ENCODE measurements at regions of chr4 and their contacts with region 1.

Region 1: DNA sequence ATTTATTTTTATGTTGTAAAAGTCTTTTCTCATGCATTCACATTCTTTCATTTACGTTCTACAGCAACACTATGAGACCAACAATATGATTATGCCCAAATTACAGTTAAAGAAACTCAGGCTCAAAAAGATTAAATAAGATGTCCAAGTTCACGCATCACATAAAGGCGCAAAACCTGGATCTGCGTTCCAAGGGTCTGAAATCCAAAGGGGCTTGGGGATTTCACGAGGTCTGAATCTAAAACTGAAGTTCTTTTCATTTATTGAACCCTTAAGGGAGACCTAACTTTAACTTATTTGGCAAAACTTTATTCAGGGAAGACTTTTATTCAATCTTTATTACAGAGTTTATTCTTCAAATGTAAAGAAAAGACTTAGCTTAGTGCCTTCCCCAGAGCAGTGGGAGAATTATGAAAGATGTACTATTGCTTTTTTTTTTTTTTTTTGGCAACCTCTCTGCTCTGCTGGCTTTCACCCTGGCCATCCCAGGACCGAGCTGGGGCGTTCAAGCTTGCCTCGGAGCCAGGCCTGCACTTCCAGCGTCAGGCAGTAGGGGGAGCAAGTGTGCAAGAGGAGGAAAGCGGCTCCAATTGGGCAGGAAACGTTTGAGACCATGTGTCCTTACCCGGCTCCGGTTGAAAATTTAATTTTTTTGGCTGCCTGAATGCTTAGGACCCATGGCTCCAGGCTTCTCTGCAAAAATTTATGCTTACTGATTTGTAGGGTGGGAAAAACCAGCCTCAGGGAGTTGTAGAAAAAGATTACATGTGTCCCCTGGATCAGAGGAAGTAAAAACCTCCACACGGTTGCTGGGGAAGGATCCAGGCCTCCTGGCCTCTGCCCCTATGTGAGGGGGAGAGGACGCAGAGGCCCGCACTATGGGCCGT is 344.3 kb upstream of the KLF3 start:
- DNase-seq: peak; percentile 83 to 94 (median 85)
- ATAC-seq: peak; percentile 81
- H3K4me3 ChIP-seq: no peak overlapping the region; the same call in 1 of the 2 replicates
- H3K27ac ChIP-seq: peak overlapping the region; percentile 84
- H3K4me1 ChIP-seq: peaks cover 8 to 29% of the 10 kb centered on the region in 2 experiments
- H3K27me3 ChIP-seq: no peaks in the 10 kb centered on the region
- CTCF ChIP-seq: peak; percentile 88 to 96 (median 92)
- EP300 ChIP-seq: peak; percentile 3; the same call in 1 of the 2 replicates
- POLR2A ChIP-seq: no peak
- RAD21 ChIP-seq: peak; percentile 91 to 93

Region 2: GRCh38 chr4:37749398-37749988 is 570.2 kb before region 1 on chr4:
- CTCF ChIA-PET with region 1: no interaction called
- POLR2A ChIA-PET with region 1: no interaction called
- in situ Hi-C with region 1: no loop called
- intact Hi-C with region 1: no loop called
- DNase-seq: no peak
- ATAC-seq: no peak
- H3K4me3 ChIP-seq: no peak overlapping the region
- H3K27ac ChIP-seq: no peak overlapping the region
- H3K4me1 ChIP-seq: no peaks in the 10 kb centered on the region
- H3K27me3 ChIP-seq: peaks cover 3 to 9% of the 10 kb centered on the region in 2 experiments; a peak in 4 of 5 replicates
- CTCF ChIP-seq: no peak
- EP300 ChIP-seq: no peak
- POLR2A ChIP-seq: no peak
- RAD21 ChIP-seq: no peak

Region 3: GRCh38 chr4:38069271-38069760 is 250.4 kb before region 1 on chr4:
- CTCF ChIA-PET with region 1: no interaction called
- POLR2A ChIA-PET with region 1: interaction called, 3 read pairs
- in situ Hi-C with region 1: loop called (anchors 10 kb)
- intact Hi-C with region 1: loop called (anchors 5 kb)
- DNase-seq: peak; percentile 41 to 78 (median 56)
- ATAC-seq: peak; percentile 96
- H3K4me3 ChIP-seq: no peak overlapping the region
- H3K27ac ChIP-seq: no peak overlapping the region
- H3K4me1 ChIP-seq: peaks cover 7 to 10% of the 10 kb centered on the region in 2 experiments; a peak in 3 of 5 replicates
- H3K27me3 ChIP-seq: no peaks in the 10 kb centered on the region
- CTCF ChIP-seq: peak; percentile 69 to 94 (median 89)
- EP300 ChIP-seq: peak; percentile 48; the same call in 1 of the 2 replicates
- POLR2A ChIP-seq: no peak
- RAD21 ChIP-seq: peak; percentile 89 to 94

Region 4: DNA sequence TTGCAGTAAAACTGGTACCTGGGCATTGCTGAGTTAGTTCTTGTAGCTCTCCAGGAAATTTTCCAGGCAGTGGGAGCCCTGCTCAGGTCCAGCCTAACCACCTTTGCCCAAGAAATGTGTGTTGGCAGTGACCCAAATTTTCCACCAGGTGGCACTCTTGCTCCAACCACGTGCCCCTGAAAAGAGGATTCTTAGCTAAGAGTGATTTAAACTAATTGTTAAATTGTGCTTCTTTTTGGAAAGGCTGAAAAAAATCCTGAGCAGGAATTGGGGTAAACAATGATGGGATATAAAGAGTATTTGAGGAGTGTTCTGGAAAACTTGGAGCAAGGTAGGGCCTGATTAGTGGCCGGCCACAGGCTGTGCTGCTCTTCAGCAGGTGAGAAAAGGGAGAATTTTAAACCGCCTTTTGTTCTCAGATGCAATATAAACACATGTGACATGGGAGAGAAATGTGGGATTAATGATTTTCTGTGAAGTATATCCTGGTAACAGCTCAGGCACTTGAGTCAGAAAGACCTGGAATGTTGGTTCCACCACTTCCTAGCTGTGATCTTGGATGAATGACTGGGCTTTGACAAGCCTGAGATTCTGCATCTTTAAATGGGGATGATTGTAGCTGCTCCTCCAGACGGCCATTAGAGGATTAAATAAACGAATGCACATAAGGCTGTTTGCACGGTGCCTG is 139.9 kb before region 1 on chr4:
- CTCF ChIA-PET with region 1: interaction called, 3 read pairs
- POLR2A ChIA-PET with region 1: interaction called, 4 read pairs
- in situ Hi-C with region 1: loop called (anchors 5 kb)
- intact Hi-C with region 1: loop called (anchors 1 kb)
- DNase-seq: peak; percentile 60 to 76 (median 72)
- ATAC-seq: peak; percentile 83
- H3K4me3 ChIP-seq: no peak overlapping the region
- H3K27ac ChIP-seq: no peak overlapping the region
- H3K4me1 ChIP-seq: peaks cover 4 to 15% of the 10 kb centered on the region in 2 experiments
- H3K27me3 ChIP-seq: no peaks in the 10 kb centered on the region; a peak in 1 of 5 replicates
- CTCF ChIP-seq: peak; percentile 82 to 90 (median 88)
- EP300 ChIP-seq: no peak
- POLR2A ChIP-seq: no peak
- RAD21 ChIP-seq: peak; percentile 97 to 98

Region 5: DNA sequence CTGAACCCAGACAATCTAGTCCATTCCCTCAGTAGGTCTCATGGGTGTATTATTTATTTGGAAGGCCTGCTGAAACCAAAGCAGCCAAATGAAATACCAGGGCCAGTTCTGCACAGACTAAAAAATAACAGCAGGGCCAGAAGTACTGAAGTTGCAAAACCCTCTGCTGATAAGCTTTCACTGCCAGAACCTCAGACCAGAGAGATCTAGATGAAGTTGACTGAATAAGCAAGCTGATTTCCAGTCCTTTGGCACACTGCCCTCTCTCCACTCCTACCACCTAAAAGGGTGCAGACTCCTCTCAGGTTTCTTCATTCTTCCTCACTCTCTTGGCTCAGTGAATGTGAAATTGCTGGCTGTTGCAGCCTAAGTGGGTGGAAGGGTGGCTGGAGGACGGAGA is 67.6 kb after region 1 on chr4:
- CTCF ChIA-PET with region 1: no interaction called
- POLR2A ChIA-PET with region 1: no interaction called
- in situ Hi-C with region 1: no loop called
- intact Hi-C with region 1: loop called (anchors 2 kb)
- DNase-seq: peak in 2 of 4 experiments; percentile 35 to 66
- ATAC-seq: peak; percentile 28
- H3K4me3 ChIP-seq: no peak overlapping the region
- H3K27ac ChIP-seq: no peak overlapping the region
- H3K4me1 ChIP-seq: peaks cover 9 to 48% of the 10 kb centered on the region in 2 experiments
- H3K27me3 ChIP-seq: no peaks in the 10 kb centered on the region
- CTCF ChIP-seq: no peak
- EP300 ChIP-seq: no peak
- POLR2A ChIP-seq: no peak
- RAD21 ChIP-seq: peak in 1 of 2 experiments; percentile 10; a peak in 1 of 4 replicates

Region 6: DNA sequence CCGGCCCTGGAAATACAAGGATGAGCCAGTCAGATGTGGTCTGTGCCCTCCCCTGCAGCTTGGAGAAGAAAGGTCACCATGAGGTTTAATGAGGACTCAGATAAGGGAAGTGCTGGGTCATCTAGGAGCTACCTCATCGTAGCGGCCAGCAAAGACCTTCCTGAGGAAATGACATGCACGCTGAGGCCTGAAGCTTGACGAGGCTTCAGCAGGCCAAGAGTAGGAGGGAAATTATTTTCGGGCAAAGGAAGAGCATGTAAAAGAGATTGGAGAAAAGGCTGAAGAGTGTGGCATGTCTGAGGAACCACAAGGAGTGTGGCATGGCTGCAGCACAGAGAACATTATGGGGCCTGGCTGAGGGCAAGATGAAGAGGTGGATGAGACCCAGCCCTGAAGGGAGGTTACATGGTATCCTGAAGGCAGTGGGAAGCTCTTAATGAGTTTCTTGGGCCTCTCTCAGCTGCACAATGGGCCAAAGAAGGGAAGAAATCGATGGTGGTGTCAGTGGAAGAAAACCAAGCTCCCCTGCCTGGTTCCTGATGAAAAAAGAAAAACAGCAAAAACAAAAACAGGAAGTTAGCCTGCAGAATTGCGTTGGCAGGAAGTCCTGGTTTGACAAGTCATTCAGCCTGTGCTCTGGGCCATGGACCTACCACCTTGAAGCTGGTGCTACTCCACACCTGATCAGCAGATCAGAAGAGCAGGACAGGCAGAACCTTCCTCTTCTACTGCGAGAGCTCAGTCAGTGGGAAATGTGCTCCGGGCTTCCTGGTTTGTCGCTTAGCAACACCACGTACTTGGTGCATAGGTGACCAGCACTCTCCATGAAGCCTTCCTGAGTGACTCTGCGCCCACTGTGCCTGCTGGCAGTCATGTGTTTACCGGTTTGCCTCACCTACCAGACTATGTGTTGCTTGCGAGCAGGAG is 209.8 kb after region 1 on chr4:
- CTCF ChIA-PET with region 1: no interaction called
- POLR2A ChIA-PET with region 1: interaction called, 3 read pairs
- in situ Hi-C with region 1: no loop called
- intact Hi-C with region 1: loop called (anchors 2 kb)
- DNase-seq: peak; percentile 83 to 95 (median 88)
- ATAC-seq: peak; percentile 95
- H3K4me3 ChIP-seq: no peak overlapping the region
- H3K27ac ChIP-seq: peak overlapping the region; percentile 98
- H3K4me1 ChIP-seq: peaks cover 22 to 34% of the 10 kb centered on the region in 2 experiments
- H3K27me3 ChIP-seq: no peaks in the 10 kb centered on the region
- CTCF ChIP-seq: peak in 1 of 3 experiments; percentile 14; a peak in 1 of 6 replicates
- EP300 ChIP-seq: peak; percentile 91
- POLR2A ChIP-seq: peak; percentile 71
- RAD21 ChIP-seq: peak; percentile 36 to 45

Region 7: DNA sequence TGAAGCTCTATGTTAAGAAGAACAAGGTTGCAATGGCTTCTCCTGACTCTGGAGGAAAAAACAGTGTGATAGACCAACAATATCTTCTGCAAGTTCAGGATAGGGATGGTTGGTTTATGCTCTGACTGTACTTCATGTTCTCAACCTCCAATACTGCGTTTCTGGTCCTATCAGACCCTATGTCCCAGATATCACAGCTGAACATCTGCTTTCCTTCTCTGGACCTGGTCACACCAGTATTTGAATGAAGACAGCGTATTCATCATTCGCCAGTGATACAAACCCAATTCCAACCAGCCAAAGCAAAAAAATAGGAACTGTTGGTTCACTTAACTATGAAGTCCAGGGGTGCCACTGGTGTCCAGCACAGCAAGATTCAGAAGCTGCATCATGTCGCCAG is 219.8 kb after region 1 on chr4:
- CTCF ChIA-PET with region 1: no interaction called
- POLR2A ChIA-PET with region 1: no interaction called
- in situ Hi-C with region 1: no loop called
- intact Hi-C with region 1: no loop called
- DNase-seq: peak in 3 of 4 experiments; percentile 25 to 55 (median 28)
- ATAC-seq: peak; percentile 75
- H3K4me3 ChIP-seq: no peak overlapping the region
- H3K27ac ChIP-seq: no peak overlapping the region
- H3K4me1 ChIP-seq: peaks cover 0 to 6% of the 10 kb centered on the region in 2 experiments; a peak in 3 of 5 replicates
- H3K27me3 ChIP-seq: no peaks in the 10 kb centered on the region
- CTCF ChIP-seq: no peak
- EP300 ChIP-seq: peak; percentile 32
- POLR2A ChIP-seq: no peak
- RAD21 ChIP-seq: no peak

Region 8: DNA sequence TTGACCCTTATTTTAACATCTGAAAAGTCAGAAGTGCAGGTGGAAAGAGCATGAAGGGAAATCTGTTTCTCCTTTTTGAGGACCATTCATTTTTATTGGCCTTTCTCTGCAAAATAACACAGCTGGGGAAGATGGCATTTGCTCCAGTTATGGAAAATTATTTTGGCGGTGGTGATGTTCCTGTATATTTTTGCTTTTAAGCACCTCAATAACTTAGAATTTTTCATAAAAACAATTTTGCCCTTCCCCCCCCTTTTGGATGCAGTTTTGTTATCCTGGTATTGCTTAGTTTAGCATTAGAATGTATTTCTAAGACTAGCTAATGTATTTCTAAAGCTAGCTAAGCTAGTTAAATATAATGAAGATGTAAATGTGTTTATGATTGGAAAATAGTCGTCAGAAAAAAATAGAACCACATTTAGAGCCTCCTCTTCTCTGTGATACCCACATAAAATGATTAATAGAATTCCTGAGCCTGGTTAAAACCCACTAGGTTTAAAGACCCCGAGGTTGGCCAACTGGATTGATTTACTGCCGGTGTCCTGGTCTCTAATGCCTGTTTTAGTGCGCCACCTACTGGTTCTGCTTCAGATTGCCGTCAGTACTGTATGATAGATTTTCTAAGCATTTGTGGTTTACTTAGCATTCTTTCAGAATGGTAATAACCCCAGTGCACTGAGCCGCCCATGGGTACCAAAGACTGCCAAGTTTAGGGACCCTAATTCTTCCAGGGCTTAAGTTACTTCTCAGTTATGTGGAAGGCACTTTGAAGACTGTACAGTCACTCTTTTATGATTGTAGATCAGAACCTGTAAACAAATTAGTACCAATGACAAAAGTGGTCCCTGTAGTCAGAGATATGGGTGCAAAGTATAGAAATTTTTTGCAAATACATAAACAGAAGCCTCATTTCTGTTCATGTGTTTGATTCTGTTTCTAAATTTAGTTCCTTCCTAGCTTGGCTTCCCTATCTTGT is 355.7 kb after region 1 on chr4:
- CTCF ChIA-PET with region 1: interaction called, 6 read pairs
- POLR2A ChIA-PET with region 1: interaction called, 4 read pairs
- in situ Hi-C with region 1: loop called (anchors 5 kb)
- intact Hi-C with region 1: loop called (anchors 1 kb)
- DNase-seq: peak; percentile 45 to 90 (median 61)
- ATAC-seq: peak; percentile 45
- H3K4me3 ChIP-seq: peak overlapping the region; percentile 19; the same call in 1 of the 2 replicates
- H3K27ac ChIP-seq: peak overlapping the region; percentile 80; the same call in 2 of the 3 replicates
- H3K4me1 ChIP-seq: peaks cover 35 to 49% of the 10 kb centered on the region in 2 experiments
- H3K27me3 ChIP-seq: no peaks in the 10 kb centered on the region
- CTCF ChIP-seq: peak; percentile 72 to 92 (median 86)
- EP300 ChIP-seq: peak; percentile 18; the same call in 1 of the 2 replicates
- POLR2A ChIP-seq: no peak
- RAD21 ChIP-seq: peak; percentile 92 to 96

Measured in K562 (cell line).